PC-9 (cell line): ENCODE measurements at regions of chr1 and their contacts with region 1.

Region 1: DNA sequence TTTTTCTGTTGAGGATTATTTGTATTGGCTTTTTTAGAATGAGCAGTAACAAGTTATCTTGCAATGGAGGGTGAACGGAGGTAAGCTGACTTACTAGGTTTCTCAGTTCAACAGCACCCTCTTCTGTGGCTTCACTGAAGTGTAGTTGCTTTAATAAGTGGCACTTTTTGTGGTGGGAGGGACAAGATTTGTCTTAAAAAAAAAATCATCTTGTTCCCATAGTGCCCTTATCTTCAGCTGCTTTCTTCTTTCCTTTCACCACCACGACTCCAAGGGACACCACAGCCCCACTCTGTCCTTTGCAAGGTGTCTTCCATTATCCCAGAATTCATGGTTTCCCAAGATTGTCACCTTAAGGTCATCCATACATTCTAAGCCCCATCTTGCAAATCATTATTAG is 92.9 kb downstream of the PIGK start:
- DNase-seq: peak; percentile 28 to 68
- H3K4me3 ChIP-seq: no peak overlapping the region
- H3K27ac ChIP-seq: no peak overlapping the region
- H3K4me1 ChIP-seq: no peaks in the 10 kb centered on the region
- H3K27me3 ChIP-seq: no peaks in the 10 kb centered on the region
- CTCF ChIP-seq: peak; percentile 89

Region 2: GRCh38 chr1:76330991-76331603 is 795.2 kb before region 1 on chr1:
- CTCF ChIA-PET with region 1: no interaction called
- POLR2A ChIA-PET with region 1: no interaction called
- intact Hi-C with region 1: loop called (anchors 1 kb)
- DNase-seq: peak; percentile 5 to 58
- H3K4me3 ChIP-seq: no peak overlapping the region
- H3K27ac ChIP-seq: no peak overlapping the region
- H3K4me1 ChIP-seq: no peaks in the 10 kb centered on the region
- H3K27me3 ChIP-seq: no peaks in the 10 kb centered on the region
- CTCF ChIP-seq: peak; percentile 94

Region 3: GRCh38 chr1:76901158-76901767 is 225.0 kb before region 1 on chr1:
- CTCF ChIA-PET with region 1: no interaction called
- POLR2A ChIA-PET with region 1: no interaction called
- intact Hi-C with region 1: loop called (anchors 1 kb)
- DNase-seq: peak in 1 of 2 experiments; percentile 35
- H3K4me3 ChIP-seq: no peak overlapping the region
- H3K27ac ChIP-seq: no peak overlapping the region
- H3K4me1 ChIP-seq: peaks cover 10% of the 10 kb centered on the region
- H3K27me3 ChIP-seq: no peaks in the 10 kb centered on the region
- CTCF ChIP-seq: peak; percentile 88